Activated B cell treated with CpG ODN at 0.5 μM for 24 hours (primary cell): ENCODE measurements at regions of chr15 and their contacts with region 1.

Region 1: GRCh38 chr15:85330901-85331588 is 49.4 kb upstream of the AKAP13 start:
- DNase-seq: peak; percentile 56
- ATAC-seq: peak; percentile 53
- H3K4me3 Mint-ChIP-seq: peak overlapping the region; percentile 90
- H3K27ac Mint-ChIP-seq: peak overlapping the region; percentile 99
- H3K4me1 Mint-ChIP-seq: peaks cover 74% of the 10 kb centered on the region
- H3K27me3 Mint-ChIP-seq: no peaks in the 10 kb centered on the region
- CTCF ChIP-seq: no peak

Region 2: GRCh38 chr15:85296615-85297402 is 34.2 kb before region 1 on chr15:
- CTCF ChIA-PET with region 1: interaction called, 75 read pairs
- POLR2A ChIA-PET with region 1: interaction called, 70 read pairs
- intact Hi-C with region 1: loop called (anchors 1 kb)
- DNase-seq: peak; percentile 40
- ATAC-seq: peak; percentile 99
- H3K4me3 Mint-ChIP-seq: peak overlapping the region; percentile 76
- H3K27ac Mint-ChIP-seq: peak overlapping the region; percentile 48
- H3K4me1 Mint-ChIP-seq: peaks cover 23% of the 10 kb centered on the region
- H3K27me3 Mint-ChIP-seq: no peaks in the 10 kb centered on the region
- CTCF ChIP-seq: peak; percentile 80

Region 3: DNA sequence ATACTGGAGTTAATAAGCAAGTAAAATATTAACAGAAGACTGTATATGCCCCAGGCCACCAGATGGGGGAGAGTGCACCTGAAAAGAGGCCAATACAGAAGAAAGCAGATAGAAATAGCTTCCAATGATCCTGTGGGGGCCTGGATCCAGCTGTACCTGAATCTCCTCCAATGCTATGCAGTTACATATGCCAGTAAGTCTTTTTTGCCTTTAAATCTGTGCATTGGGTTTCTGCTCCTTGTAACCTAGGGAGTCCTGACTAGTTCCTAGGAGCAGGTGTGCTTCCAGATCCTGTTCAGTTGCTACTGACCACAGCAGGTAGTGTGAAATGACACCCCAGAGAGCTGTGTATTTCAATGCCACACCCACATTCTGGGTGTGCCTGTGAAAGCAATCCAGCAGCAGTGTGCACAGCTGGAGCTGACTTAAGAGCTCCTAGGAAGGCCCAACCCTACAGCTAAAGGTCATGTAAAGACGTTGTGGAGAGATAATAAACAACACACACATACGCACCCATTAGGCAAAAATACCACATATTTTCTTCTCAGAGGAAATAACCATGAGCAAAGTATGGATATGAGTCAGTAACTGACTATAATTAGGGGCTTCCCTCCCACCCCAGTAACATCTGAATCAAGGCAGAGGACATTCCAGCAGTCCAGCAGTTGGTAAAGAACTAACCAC is 12.9 kb before region 1 on chr15:
- CTCF ChIA-PET with region 1: interaction called, 78 read pairs
- POLR2A ChIA-PET with region 1: interaction called, 409 read pairs
- intact Hi-C with region 1: loop called (anchors 1 kb)
- DNase-seq: no peak
- ATAC-seq: peak; percentile 87
- H3K4me3 Mint-ChIP-seq: peak overlapping the region; percentile 69
- H3K27ac Mint-ChIP-seq: peak overlapping the region; percentile 87
- H3K4me1 Mint-ChIP-seq: peaks cover 74% of the 10 kb centered on the region
- H3K27me3 Mint-ChIP-seq: no peaks in the 10 kb centered on the region
- CTCF ChIP-seq: no peak

Region 4: DNA sequence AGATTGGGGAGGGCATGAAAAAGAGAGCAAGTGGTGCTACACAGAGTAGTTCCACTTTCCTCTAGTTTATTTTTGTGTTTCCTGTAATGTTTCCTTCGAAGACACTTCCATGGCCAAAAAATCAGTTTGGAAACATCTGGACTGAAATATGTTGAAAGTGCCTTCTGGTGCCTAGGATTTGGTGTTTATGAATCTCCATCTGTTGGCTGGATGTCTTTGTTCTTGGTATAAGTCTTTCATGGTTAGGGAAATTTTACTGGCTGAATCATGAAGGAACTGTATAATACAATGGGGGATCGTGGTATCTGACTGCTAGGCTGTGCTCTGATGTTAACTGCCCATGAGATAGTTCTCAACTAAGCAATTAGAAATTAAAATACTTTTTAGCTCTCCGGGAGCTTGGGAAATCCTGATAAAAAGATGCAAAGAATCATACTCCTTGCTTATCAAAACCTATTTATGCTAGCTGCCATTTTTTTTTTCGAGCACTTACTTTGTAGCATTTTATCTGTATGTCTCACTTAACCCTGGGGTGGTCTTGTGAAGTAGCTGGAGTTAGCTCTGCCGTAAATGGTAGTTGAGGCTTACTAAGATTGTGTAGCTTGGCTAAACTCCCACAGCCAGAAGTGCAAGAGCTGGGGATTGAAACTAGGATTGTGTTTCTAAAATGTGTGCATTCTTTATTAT is 71.3 kb after region 1 on chr15:
- CTCF ChIA-PET with region 1: interaction called, 15 read pairs
- POLR2A ChIA-PET with region 1: interaction called, 25 read pairs
- intact Hi-C with region 1: no loop called
- DNase-seq: no peak
- ATAC-seq: no peak
- H3K4me3 Mint-ChIP-seq: peak overlapping the region; percentile 12
- H3K27ac Mint-ChIP-seq: peak overlapping the region; percentile 89
- H3K4me1 Mint-ChIP-seq: peaks cover 89% of the 10 kb centered on the region
- H3K27me3 Mint-ChIP-seq: no peaks in the 10 kb centered on the region
- CTCF ChIP-seq: no peak

Region 5: DNA sequence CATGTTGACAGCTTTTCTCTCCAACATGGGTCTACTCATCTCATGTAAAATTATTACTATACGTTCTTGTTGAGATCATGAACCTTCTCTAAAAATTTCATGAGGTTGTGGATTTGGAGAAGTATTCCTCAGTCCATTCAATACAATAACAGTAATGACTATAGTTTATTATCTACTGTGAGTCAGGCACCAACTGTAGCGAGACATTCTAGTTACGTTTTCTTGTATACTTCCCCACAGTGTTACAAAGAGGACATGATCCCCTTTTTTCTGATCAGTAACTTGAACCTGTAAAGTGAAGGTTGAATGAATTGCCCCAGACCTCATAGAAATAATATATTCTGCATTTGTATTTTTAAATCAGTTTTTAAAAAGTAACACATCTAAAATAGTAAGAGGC is 125.8 kb after region 1 on chr15:
- CTCF ChIA-PET with region 1: no interaction called
- POLR2A ChIA-PET with region 1: interaction called, 10 read pairs
- intact Hi-C with region 1: loop called (anchors 1 kb)
- DNase-seq: no peak
- ATAC-seq: peak; percentile 69
- H3K4me3 Mint-ChIP-seq: no peak overlapping the region
- H3K27ac Mint-ChIP-seq: peak overlapping the region; percentile 88
- H3K4me1 Mint-ChIP-seq: peaks cover 90% of the 10 kb centered on the region
- H3K27me3 Mint-ChIP-seq: no peaks in the 10 kb centered on the region
- CTCF ChIP-seq: no peak

Region 6: DNA sequence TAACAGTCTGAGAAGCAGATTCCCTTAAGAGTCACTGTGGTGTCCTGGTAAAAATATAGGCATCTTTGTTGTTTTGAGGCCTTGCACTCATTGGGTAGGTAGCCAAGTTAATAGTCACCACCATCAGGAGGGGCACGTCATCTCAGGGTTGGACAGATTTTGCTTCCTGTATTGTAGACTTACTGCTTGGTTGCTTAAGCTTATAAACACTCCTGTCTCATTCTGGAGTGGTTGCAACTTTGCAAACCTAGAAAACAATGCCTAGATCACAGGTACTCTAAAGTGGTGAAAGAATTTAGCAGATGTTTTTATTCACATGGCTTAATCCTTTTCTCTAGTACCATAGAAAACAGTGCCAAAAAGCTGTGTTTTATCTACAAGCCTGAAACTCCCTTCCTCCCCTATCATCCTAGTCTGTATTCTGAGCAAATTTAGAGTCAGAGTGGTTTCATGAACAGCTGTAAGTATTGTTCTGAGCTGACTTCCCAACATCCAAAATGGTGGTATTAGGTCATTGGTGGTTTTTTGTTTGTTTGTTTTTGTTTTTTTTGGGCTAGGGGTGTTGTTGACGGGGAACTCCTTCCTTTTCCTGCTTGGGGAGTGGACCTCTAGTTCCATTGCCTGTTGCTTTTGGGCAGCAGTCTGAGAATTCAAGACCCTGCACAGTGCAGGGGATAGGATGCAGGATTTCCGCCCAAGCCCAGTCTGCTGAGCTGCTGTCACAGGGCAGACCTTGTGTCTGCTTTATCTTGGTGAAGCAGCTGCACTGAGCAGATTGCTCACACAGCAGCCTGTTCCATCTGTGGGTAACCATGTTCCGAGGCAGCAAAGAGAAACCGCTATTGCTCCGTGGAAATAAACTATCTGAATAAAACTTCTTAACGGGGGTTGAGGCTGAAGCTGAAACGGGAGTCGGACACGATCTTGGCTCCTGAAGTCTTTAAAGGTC is 251.4 kb after region 1 on chr15:
- CTCF ChIA-PET with region 1: no interaction called
- POLR2A ChIA-PET with region 1: interaction called, 7 read pairs
- intact Hi-C with region 1: loop called (anchors 2 kb)
- DNase-seq: no peak
- ATAC-seq: peak; percentile 59
- H3K4me3 Mint-ChIP-seq: peak overlapping the region; percentile 83
- H3K27ac Mint-ChIP-seq: peak overlapping the region; percentile 90
- H3K4me1 Mint-ChIP-seq: peaks cover 76% of the 10 kb centered on the region
- H3K27me3 Mint-ChIP-seq: no peaks in the 10 kb centered on the region
- CTCF ChIP-seq: no peak

Region 7: GRCh38 chr15:85597155-85597815 is 266.2 kb after region 1 on chr15:
- CTCF ChIA-PET with region 1: no interaction called
- POLR2A ChIA-PET with region 1: no interaction called
- intact Hi-C with region 1: no loop called
- DNase-seq: no peak
- ATAC-seq: no peak
- H3K4me3 Mint-ChIP-seq: no peak overlapping the region
- H3K27ac Mint-ChIP-seq: no peak overlapping the region
- H3K4me1 Mint-ChIP-seq: peaks cover 7% of the 10 kb centered on the region
- H3K27me3 Mint-ChIP-seq: no peaks in the 10 kb centered on the region
- CTCF ChIP-seq: no peak